HEK293T (cell line): ENCODE measurements at regions of chr22 and their contacts with region 1.

Region 1: DNA sequence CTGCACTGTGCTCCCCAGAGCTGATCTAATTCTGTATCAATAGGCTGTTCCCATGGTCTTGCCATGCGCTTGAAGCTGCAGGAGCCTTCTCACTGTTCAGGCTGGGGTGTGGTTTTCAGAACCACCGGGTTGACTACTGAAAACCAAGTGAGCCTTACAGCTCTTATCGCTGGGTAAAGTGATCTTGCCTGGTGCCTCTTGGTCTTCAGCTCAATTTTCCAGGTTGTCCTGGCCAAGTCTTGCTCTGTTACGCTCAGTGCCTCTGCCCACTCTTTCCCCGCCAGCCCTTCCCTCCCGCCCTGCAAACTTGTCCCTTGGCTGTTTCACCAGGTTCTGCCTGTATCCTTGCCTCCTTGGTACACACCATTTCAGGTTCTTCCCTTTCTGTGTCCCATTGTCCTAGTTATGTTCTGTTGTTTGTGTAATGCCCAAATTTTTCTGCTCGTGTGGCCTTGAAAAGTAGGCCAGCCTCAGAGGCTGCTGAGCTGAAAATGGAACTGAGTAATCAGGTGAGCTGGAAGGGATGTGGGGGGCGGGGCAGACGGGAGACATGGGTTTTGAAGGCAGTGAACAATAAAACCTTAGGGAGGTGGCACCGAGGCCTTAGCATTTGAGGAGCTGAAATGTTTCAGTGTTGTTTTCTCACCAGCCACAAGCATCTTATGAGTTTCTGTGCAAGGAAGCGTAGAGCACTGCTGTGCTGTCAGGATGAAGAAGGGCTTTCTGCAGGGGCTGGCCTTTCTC is 11.2 kb downstream of the PEX26 start:
- DNase-seq: no peak

Region 2: DNA sequence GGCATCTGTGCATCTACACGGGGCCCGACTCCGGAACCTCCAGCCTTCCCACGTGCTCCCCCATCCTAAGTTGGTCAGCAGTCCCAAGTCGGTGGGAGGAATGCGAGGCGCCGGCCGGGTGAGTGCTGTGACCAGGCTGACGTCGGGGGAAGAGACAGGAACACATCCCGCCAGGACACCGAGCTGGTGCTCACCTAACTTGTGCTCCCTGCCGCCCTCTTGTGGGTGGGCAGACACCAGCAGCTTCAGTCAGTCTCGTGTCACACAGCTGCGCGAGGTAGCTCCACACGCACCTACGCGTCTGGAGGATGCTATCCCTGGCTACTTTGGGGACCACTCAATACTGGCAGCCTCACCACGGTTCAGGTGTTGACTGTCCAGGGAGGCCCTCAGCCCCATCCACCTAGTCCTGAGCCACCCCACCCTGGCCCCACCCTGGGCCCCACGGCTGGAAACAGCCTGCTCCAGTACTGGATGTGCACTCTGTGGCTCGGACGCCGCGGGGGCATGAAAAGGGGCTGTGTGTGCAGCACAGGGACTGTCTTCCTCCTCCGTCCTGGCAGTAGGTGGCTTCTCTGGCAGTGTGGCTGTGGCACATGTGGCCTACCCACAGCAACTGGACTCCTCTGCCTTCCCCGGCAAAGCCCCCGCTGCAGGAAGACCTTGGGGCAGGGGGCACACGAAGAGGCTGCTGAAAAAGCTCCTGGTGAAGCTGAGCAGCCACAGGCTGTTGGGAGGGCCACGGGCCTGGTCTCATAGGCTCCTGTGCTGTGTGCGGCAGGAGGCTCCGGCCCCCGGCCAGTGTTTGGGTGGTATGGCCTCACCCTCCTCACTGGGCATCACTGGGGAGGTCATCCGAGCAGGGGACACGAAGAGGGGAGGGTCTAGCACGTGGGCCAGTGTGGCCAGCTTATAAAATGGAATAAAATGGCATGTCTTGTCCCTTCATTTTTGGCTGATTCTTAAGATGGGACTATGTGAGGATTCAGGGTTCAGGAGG is 303.5 kb before region 1 on chr22:
- CTCF ChIA-PET with region 1: no interaction called
- POLR2A ChIA-PET with region 1: no interaction called
- DNase-seq: peak; percentile 91

Region 3: DNA sequence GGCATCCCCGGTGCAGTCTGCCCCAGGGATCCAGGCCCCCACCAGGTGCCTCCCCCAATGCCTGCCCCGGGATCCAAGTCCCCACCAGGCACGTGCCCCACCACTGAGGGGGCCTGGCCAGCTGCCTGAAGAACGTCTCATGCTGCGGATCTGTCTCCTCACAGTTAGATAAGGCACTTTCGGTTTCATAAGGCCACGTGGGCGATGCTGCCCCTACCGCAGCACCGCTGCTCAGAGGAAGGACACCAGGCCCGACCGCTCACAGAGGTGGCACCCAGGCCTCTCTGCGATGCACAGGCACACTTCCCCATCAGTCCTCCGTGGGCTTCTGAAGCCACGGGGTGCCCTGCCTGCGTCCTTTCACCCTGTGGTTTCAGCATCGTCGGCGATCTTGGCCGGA is 246.6 kb before region 1 on chr22:
- CTCF ChIA-PET with region 1: no interaction called
- POLR2A ChIA-PET with region 1: no interaction called
- DNase-seq: no peak

Region 4: DNA sequence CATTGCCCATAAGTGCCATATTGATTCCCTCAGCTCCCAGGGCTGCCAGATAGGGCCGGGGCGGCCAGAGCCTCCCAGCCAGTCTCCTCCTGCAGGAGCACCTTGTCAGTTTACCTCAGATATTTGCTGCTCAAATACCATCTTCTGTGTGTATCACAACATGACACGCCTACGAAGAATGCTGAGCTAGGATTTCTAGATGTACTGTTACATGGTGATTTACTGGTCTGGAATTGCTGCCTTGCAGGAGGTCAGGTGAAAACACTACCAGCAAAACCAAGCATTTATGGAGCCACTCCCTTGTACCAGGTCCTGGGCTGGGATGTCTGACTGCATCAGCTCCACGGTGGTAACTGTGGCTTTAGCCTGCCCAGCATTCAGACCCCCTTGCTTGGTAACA is 76.5 kb before region 1 on chr22:
- CTCF ChIA-PET with region 1: interaction called, 11 read pairs
- POLR2A ChIA-PET with region 1: no interaction called
- DNase-seq: no peak